HepG2 (cell line): ENCODE measurements at regions of chr14 and their contacts with region 1.

Region 1: DNA sequence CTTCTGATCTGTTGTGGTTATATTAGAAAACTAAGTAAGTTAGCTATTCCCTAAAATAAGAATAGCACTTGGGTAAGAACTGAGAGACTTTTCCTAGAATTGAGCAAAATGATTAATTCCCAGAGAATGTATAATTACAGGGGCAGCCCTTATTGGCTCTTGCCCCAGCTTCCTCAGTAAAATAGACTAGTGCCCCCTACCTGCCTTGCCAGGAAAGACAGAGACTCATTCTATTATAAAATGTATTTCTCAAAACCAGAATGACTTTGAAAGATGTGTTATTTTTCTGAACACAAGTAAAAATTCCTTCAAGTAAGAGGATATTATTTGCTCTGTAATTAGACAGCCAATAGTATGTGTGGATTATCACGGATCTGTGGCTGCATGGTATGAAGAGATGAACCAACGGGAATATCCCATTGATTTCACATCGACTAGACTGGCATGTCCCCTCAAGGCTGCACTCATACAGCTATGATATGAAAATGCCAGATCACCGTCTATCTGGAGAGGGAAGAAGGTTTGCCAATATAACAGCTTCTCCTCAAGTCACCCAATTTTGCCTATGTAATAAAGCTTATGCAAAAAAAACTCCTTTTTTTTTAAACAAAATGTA is 7.4 kb upstream of the GLRX5 start:
- DNase-seq: peak; percentile 36
- ATAC-seq: no peak
- H3K4me3 ChIP-seq: no peak overlapping the region
- H3K27ac ChIP-seq: peak overlapping the region; percentile 99
- H3K4me1 ChIP-seq: peaks cover 91% of the 10 kb centered on the region
- H3K27me3 ChIP-seq: no peaks in the 10 kb centered on the region
- CTCF ChIP-seq: peak; percentile 64
- EP300 ChIP-seq: no peak
- POLR2A ChIP-seq: no peak
- RAD21 ChIP-seq: 0 out of 2 replicates have a peak, but pooled peaks have one; percentile 36

Region 2: DNA sequence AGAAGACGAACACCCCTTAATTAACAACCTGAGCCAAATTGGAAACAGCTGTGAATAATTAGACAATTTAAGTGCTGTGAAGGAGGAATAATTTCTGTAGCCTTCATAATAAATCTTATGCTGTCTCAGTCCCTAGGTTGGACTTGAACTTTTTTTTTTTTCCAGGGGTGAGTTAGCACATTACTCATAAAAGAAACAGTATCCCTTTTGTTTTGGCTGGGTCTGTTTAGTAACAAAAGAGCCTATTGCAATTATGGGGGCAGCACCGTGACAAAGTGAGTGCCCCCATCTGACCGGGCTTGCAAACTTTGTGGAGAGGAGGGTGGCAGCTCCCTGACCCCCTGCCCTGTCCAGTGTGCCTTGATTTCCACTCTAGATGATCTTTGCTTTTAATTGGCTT is 537.5 kb before region 1 on chr14:
- CTCF ChIA-PET with region 1: no interaction called
- POLR2A ChIA-PET with region 1: no interaction called
- in situ Hi-C with region 1: no loop called
- intact Hi-C with region 1: no loop called
- DNase-seq: no peak
- ATAC-seq: no peak
- H3K4me3 ChIP-seq: no peak overlapping the region
- H3K27ac ChIP-seq: no peak overlapping the region
- H3K4me1 ChIP-seq: no peaks in the 10 kb centered on the region
- H3K27me3 ChIP-seq: peaks cover 0 to under 1% of the 10 kb centered on the region in 2 experiments; a peak in 1 of 5 replicates
- CTCF ChIP-seq: no peak
- EP300 ChIP-seq: no peak
- POLR2A ChIP-seq: no peak
- RAD21 ChIP-seq: no peak

Region 3: DNA sequence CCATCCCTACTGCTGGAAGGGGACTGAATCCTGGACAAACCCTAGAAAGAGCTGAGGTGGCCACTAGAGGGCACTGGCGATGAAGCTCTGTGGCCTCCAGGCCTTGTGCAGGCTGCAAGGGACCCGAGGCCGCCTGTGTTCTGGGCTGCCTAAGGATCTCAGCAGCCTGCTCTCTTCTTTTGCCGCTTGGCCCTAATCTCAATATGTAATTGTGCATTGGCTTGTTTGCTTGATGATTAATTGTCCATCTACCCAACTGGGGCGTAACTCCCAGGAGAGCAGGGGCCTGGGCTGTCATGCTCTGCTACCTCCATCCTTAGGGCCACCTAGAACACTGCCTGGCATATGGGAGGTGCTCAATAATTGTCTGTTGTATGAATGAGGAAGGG is 84.9 kb before region 1 on chr14:
- CTCF ChIA-PET with region 1: interaction called, 18 read pairs
- POLR2A ChIA-PET with region 1: interaction called, 104 read pairs
- in situ Hi-C with region 1: loop called (anchors 5 kb)
- intact Hi-C with region 1: loop called (anchors 1 kb)
- DNase-seq: peak; percentile 66
- ATAC-seq: peak; percentile 90
- H3K4me3 ChIP-seq: no peak overlapping the region
- H3K27ac ChIP-seq: peak overlapping the region; percentile 80
- H3K4me1 ChIP-seq: peaks cover 45% of the 10 kb centered on the region
- H3K27me3 ChIP-seq: no peaks in the 10 kb centered on the region
- CTCF ChIP-seq: peak; percentile 95
- EP300 ChIP-seq: no peak
- POLR2A ChIP-seq: no peak
- RAD21 ChIP-seq: peak; percentile 91

Region 4: DNA sequence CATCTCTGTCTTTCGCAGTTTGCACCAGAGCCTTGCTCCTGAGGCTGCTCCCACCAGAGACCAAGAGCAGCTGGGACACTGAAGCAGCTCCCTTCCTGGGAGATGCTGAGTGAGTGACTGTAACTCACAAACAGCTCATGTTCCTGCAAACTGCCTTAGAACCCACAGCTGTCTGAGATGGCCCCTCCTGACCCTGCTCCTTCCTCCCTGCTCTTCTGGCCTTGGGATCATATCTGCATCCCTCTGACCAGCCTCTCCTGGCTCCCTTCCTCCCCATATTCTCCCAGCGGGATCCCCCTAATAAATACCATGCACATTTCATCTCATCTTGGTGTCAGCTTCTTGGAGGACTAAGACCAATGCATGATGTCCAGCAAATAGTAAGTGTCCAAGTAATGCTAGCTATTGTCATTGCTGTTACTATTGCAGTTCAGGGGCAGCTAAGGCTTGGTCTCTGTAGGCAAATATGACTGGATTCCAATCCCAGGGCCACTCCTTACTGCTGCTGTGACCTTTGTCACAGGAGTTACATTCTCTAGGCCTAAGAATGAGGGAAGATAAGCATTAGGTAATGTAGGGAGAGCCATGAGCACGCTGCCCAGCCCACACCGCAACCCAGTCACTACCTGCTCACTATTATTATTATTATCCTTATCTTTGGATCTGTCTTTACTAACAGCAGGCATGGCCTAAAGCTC is 58.9 kb before region 1 on chr14:
- CTCF ChIA-PET with region 1: no interaction called
- POLR2A ChIA-PET with region 1: interaction called, 17 read pairs
- in situ Hi-C with region 1: no loop called
- intact Hi-C with region 1: no loop called
- DNase-seq: peak; percentile 84
- ATAC-seq: peak; percentile 95
- H3K4me3 ChIP-seq: no peak overlapping the region; a peak in 1 of 6 replicates
- H3K27ac ChIP-seq: peak overlapping the region; percentile 58
- H3K4me1 ChIP-seq: peaks cover 22% of the 10 kb centered on the region
- H3K27me3 ChIP-seq: no peaks in the 10 kb centered on the region
- CTCF ChIP-seq: no peak
- EP300 ChIP-seq: no peak
- POLR2A ChIP-seq: no peak
- RAD21 ChIP-seq: no peak

Region 5: DNA sequence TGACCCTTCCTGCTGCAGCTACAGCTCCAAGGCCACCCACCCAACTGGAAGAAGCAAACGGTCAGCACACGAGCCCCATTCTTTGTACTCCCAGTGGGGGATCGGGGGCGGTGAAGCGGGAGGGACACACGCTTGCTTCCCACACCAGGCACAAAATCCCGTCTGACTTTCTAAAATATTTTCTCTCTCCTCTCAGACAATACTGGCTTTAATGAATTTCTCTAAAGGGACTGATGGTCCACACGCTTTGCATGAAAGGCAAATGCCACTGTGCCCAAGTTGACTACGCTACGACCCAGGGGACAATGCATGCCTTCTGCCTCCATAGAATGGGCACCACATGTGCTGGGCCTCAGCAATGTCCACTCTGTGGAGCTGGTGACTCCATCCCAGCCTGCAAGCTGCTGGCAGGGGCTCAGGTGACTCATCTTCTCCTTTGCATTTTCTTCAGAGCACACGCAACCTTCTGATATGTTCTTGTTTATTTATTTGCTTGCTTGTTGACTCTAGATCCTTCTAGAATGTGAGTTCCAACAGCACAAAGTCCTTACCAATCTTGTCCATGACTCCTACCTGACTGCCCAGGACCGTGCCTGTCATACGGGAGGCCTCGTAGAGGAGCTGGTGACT is 26.6 kb before region 1 on chr14:
- CTCF ChIA-PET with region 1: no interaction called
- POLR2A ChIA-PET with region 1: interaction called, 20 read pairs
- in situ Hi-C with region 1: no loop called
- intact Hi-C with region 1: no loop called
- DNase-seq: no peak
- ATAC-seq: peak; percentile 51
- H3K4me3 ChIP-seq: peak overlapping the region in 1 of 3 experiments; percentile 43; a peak in 1 of 6 replicates
- H3K27ac ChIP-seq: peak overlapping the region; percentile 43
- H3K4me1 ChIP-seq: peaks cover 83% of the 10 kb centered on the region
- H3K27me3 ChIP-seq: no peaks in the 10 kb centered on the region
- CTCF ChIP-seq: no peak
- EP300 ChIP-seq: no peak; a peak in 1 of 4 replicates
- POLR2A ChIP-seq: no peak
- RAD21 ChIP-seq: no peak

Region 6: DNA sequence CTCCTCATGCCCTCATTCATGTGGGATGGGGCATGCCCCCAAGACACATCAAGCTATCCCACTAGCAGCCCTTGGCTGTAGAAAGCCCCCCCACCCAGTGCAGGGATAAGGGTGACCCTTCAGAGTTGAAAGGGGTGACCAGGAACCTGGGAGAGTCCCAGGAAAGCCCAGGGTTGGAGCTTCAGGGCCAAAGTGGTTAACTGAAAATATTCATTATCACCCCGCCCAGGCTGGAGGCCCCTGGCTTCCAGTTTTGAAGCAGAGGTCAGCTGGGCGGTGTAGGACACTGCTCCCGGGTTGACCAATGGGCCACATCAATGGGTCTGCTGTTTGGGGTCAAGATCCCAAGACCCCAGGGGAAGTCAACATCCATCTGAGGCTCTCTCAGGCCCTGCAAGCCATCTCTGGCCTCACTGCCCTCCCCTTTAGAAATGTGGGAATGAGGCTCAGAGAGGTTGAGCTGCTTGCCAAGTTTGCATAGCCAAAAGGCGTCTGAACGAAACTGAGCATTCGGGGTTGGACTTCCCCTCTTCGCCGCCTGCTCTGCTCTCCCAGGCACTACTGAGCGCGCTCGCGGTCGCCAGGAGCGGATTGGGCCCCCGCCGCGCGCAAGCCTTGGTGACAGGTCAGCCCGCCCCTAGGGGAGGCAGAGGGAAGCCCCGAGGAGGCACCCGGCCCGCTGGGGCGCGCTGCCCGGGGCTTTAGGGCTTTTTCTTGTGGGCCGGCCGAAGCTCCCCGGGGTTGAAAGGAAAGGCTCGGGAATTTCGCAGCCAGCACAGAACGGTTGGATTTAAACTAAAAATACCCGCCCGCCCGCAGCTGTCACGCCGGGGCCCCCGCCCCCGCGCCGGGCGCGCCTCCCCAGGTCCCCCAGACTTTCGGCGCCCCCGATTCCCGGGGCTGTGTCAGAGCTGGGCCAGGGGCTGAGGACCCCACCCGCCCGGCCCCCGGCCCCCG is 11.6 kb before region 1 on chr14:
- CTCF ChIA-PET with region 1: no interaction called
- POLR2A ChIA-PET with region 1: interaction called, 37 read pairs
- in situ Hi-C with region 1: no loop called
- intact Hi-C with region 1: loop called (anchors 1 kb)
- DNase-seq: peak; percentile 39
- ATAC-seq: peak; percentile 92
- H3K4me3 ChIP-seq: peak overlapping the region; percentile 62 to 73 (median 62)
- H3K27ac ChIP-seq: peak overlapping the region; percentile 59
- H3K4me1 ChIP-seq: peaks cover 70% of the 10 kb centered on the region
- H3K27me3 ChIP-seq: no peaks in the 10 kb centered on the region; a peak in 1 of 5 replicates
- CTCF ChIP-seq: peak; percentile 51
- EP300 ChIP-seq: peak in 1 of 2 experiments; percentile 16; a peak in 1 of 4 replicates
- POLR2A ChIP-seq: no peak
- RAD21 ChIP-seq: peak; percentile 54; the same call in 1 of the 2 replicates

Region 7: GRCh38 chr14:95545179-95546168 is 18.0 kb after region 1 on chr14:
- CTCF ChIA-PET with region 1: no interaction called
- POLR2A ChIA-PET with region 1: interaction called, 183 read pairs
- in situ Hi-C with region 1: no loop called
- intact Hi-C with region 1: no loop called
- DNase-seq: no peak
- ATAC-seq: no peak
- H3K4me3 ChIP-seq: no peak overlapping the region
- H3K27ac ChIP-seq: no peak overlapping the region
- H3K4me1 ChIP-seq: peaks cover 75% of the 10 kb centered on the region
- H3K27me3 ChIP-seq: no peaks in the 10 kb centered on the region
- CTCF ChIP-seq: no peak
- EP300 ChIP-seq: no peak
- POLR2A ChIP-seq: no peak
- RAD21 ChIP-seq: no peak